ENCODE measurements at regions of chr11 and their contacts with region 1.

Region 1: DNA sequence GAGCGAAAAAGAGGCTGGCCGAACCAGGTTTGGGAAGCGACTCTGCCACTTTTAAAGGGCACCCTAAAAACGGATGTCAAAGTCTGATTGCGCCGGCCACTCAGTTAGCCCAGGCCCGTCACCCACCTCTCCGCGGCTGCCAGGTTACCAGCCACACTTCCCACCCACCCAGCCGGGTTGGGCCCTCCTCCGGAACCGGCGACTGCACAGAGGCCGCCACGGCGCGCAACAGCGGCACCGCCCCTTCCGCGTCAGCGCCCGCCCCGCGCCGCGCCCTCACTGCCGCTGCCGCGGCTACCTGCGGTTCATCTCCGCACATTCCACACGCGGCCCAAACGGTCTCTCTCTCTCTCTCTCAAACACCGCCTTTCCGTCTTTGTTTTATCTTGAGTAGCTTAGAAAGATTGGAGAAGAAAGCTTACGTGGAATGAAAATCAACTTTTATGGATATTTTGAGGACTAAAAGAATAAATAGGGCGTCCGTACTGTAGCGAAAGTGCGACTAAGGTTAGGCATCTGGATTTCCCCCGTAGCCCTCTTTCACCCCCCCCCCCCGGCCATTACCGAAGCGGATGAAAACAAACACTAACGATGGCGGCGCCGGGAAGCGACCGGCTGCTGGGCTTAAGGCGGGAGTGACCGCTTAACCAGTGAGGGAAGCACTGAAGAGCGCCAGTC is at the starts of genes ATG13 and HARBI1:
- DNase-seq: peak; percentile 94
- ATAC-seq: peak; percentile 97
- H3K4me3 Mint-ChIP-seq: peak within 1 kb of the TSS; percentile 89
- H3K27ac Mint-ChIP-seq: peak within 1 kb of the TSS; percentile 99
- H3K4me1 Mint-ChIP-seq: peaks cover 40% of the 10 kb centered on the region
- H3K27me3 Mint-ChIP-seq: no peaks in the 10 kb centered on the region
- total RNA-seq, gene ATG13: 64.0 to 72.9 TPM
- total RNA-seq, gene HARBI1: 5.9 to 6.6 TPM

Region 2: DNA sequence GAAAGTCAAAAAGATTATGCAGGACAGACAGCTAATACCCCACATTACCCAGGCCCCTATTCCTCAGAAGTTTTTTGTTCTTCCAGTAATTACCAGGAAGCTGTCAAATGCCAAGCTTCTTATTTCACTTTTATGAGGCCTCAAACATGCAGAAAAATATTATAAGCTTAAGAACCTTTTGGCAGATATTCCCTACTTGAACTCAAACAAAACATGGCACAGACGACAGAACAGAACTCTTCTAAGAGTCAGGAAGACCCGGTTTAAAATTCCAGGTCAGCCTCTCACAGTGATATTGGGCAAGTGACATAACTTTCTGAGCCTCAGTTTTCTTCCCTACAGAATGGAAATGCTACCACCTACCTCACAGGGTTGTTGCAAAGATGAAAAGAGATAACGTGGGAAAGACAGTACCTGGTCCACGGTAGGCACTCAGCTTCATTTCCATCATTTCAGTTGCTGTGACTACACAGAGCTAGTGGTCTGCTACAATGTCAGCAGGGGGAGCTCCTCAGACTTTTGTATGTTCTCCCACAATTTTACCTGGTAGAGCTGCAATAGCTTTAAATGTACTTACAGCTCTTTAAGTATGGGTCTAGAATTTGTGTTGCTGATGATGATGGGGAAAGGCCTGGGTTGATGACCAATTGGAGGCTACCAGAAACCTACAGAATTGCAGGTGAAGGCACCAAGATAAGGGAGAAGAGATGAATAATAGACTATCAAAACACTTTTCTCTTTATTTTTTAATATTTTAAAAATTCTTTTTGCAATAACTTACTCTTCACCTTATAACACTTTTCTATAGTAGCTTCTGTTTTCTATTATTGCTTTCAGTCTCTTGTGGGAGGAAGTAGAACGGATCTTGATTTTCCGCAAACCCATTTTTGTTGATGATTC is 127.2 kb before region 1 on chr11:
- CTCF ChIA-PET with region 1: interaction called, 20 read pairs
- DNase-seq: peak; percentile 53
- ATAC-seq: peak; percentile 80
- H3K4me3 Mint-ChIP-seq: no peak overlapping the region
- H3K27ac Mint-ChIP-seq: no peak overlapping the region
- H3K4me1 Mint-ChIP-seq: peaks cover 4% of the 10 kb centered on the region
- H3K27me3 Mint-ChIP-seq: no peaks in the 10 kb centered on the region

Region 3: GRCh38 chr11:46560300-46560991 is 56.7 kb before region 1 on chr11:
- CTCF ChIA-PET with region 1: interaction called, 15 read pairs
- DNase-seq: peak; percentile 56
- ATAC-seq: peak; percentile 80
- H3K4me3 Mint-ChIP-seq: peak overlapping the region; percentile 91
- H3K27ac Mint-ChIP-seq: peak overlapping the region; percentile 97
- H3K4me1 Mint-ChIP-seq: peaks cover 61% of the 10 kb centered on the region
- H3K27me3 Mint-ChIP-seq: no peaks in the 10 kb centered on the region

Region 4: DNA sequence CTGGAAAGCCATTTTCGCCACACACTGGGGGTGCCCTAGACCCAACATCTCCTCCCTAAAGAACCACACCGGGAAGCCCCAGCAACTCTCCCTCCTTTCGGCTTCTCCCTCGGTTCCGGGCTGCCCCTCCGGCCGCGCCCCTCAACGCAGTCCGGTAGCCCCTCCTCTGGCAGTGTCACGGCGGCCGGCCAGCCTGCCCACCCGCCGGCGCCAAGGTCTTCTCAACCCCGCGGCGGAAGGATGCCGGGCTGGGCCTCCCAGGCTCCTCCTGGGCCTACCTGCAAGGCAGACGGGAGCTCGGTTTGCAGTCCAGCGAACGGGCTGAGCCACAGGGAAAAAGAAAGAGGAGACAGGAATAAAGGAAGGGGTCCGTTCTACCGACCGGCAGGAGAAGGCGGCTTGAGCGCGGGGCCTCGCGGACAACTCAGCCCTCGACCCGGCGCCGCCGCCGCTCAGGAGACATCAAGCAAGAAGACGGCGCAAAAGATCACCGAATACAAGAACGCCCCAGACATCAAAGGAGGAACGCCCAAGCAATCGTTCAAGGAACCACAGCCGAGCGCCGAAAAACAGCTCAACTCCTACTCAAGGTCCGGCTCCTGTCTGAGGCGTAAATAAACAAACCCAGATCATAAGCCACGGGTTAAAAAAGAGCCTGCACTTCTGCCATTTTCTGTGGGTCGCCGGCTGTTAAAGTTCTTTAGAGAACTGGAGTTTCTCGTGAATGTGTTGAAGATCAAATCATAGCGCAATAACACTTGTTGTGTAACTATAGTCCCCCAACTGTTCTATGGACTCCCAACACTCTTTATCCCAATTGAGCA is 23.4 kb before region 1 on chr11 and contains the start of gene AMBRA1:
- CTCF ChIA-PET with region 1: interaction called, 14 read pairs
- DNase-seq: peak; percentile 93
- ATAC-seq: peak; percentile 95
- H3K4me3 Mint-ChIP-seq: peak within 1 kb of the TSS; percentile 97
- H3K27ac Mint-ChIP-seq: peak within 1 kb of the TSS; percentile 95
- H3K4me1 Mint-ChIP-seq: peaks cover 50% of the 10 kb centered on the region
- H3K27me3 Mint-ChIP-seq: no peaks in the 10 kb centered on the region
- total RNA-seq, gene AMBRA1: 36.1 to 41.9 TPM

Region 5: DNA sequence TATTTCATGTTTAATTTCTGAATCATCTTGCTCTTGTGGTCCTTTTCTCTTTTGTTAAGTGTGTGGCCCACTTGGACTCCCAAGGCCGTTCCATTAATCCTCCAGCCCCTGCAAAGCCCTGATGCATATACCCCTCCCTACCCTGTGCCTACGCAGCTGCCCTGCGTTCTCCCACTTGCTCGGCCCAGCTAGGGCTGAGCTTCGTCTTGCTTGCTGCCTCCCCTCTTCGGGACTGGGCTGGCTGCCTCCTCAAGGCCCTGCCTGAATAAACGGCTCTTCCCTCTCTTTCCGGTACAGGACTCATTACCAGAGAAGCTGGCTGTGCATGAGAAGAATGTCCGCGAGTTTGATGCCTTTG is 54.8 kb after region 1 on chr11:
- CTCF ChIA-PET with region 1: interaction called, 11 read pairs
- DNase-seq: no peak
- ATAC-seq: no peak
- H3K4me3 Mint-ChIP-seq: no peak overlapping the region
- H3K27ac Mint-ChIP-seq: peak overlapping the region; percentile 93
- H3K4me1 Mint-ChIP-seq: peaks cover 57% of the 10 kb centered on the region
- H3K27me3 Mint-ChIP-seq: no peaks in the 10 kb centered on the region